ENCODE measurements at regions of chr2 and their contacts with region 1.

Region 1: GRCh38 chr2:152627351-152627957 is 89.8 kb downstream of the PRPF40A start:
- DNase-seq: no peak
- H3K4me3 ChIP-seq: no peak overlapping the region
- H3K27ac ChIP-seq: no peak overlapping the region
- H3K4me1 ChIP-seq: no peaks in the 10 kb centered on the region
- H3K27me3 ChIP-seq: no peaks in the 10 kb centered on the region
- CTCF ChIP-seq: peak; percentile 74

Region 2: DNA sequence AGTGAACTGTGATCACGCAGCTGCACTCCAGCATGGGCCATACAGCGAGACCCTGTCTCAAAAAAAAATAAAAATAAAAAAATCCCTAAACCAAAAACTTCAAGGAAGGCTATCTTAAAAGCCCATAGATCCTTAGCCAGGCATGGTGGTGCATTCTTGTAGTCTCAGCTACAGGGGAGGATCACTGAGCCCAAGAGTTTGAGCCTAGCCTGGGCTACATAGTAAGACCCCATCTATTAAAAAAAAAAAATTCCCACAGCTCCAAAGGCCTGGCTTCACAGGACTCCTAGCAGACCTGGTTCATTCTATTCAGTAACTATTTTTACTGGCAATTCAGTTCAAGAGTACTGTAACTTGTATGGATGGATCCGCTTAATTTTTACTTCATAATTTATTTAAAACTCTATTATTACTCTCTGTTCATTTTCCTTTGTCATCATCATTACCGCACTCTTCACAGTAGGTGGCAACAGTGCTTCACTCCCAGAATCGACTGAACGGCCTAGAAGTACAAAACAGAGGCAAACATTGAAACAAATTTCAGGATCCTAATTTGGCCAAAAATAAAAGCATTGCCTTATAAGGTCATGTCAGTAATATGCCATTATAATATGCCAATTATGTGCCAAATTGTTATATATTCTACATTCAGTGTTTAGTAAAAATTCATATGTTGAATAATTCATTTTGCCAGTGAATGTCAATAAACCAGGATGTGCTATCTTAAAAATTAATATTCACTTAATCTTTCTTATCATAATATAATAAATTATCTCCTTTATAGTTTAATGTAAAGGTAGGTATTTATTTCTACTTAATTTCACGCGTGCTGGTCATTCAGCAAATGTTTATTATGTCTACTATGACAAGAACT is 437.6 kb before region 1 on chr2:
- CTCF ChIA-PET with region 1: no interaction called
- POLR2A ChIA-PET with region 1: no interaction called
- intact Hi-C with region 1: loop called (anchors 1 kb)
- DNase-seq: peak; percentile 39 to 53
- H3K4me3 ChIP-seq: no peak overlapping the region
- H3K27ac ChIP-seq: no peak overlapping the region
- H3K4me1 ChIP-seq: no peaks in the 10 kb centered on the region
- H3K27me3 ChIP-seq: no peaks in the 10 kb centered on the region
- CTCF ChIP-seq: peak; percentile 85